GM13977 (cell line): ENCODE measurements at regions of chr2 and their contacts with region 1.

Region 1: GRCh38 chr2:26933431-26934334 is 36.8 kb upstream of the MAPRE3 start:
- DNase-seq: no peak
- CTCF ChIP-seq: no peak

Region 2: DNA sequence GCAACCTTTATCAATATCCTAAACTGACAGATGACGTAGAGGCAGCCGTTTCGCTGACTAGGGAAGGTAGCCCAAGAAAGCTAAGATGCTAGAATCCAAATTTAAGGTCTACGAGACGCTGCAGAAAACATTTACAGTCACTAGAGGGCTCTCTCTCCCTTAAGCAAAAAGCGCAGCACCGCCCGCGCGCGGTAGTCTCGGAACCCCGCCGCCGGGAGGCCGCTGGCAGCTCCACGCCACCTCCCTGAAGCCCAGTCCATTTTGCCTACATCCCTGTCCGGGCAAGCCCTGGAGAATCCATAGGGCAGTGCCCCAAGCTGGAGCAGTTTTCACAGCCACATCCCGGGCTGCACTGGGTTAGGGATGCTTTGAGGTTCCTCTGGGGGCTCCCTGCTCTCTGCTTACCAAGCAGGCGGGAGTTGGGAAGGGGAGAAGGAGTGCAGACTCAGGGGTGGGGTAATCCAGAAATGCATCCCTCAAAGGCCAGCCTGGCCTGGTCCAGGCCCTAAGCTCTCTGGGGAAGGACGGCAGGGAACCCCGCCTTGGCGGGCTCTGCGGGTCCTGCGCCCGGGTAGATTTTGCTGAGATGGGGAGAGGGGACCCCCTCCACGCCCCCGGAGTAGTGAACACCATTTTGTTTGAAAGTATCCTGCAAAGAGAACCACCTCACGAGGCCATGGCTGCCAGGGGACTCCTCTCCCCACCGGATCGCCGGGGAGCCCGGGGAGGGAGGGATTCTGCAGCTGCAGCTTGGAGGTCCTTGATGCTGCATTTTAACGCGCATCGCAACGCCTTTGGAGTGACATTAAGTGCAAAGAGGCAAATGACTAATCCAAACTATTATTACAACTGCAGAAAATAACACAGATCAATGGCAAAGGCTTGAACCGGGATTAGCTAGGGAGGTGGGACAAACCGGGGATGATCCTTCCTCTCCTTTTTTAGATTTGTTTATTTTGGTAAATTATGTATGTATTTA is 87.1 kb before region 1 on chr2:
- in situ Hi-C with region 1: loop called (anchors 10 kb)
- DNase-seq: peak; percentile 85
- CTCF ChIP-seq: peak; percentile 76

Region 3: DNA sequence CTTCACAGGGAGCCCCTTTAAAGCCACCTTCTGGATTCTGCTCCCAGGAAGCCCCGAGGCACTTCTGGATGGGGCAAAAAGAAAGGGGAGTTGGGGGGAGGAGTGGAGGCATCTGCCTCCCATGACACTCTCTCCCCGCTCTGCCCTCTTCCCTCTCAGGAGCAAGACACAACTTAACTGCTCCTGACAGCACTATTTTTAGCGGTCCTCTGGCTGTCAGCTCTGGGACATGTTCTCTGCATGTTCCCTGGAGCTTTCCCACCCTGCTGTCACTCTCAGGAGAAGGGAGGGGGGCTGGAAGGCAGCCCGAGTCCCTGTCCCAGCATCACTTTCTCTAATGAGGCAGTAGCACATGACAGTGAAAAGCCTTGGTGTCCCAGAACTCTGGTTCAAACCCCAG is 1594.5 kb after region 1 on chr2:
- in situ Hi-C with region 1: no loop called
- DNase-seq: no peak
- CTCF ChIP-seq: no peak